ENCODE measurements at regions of chr10 and their contacts with region 1.

Region 1: GRCh38 chr10:93554760-93555432 is 11.6 kb upstream of the FFAR4 start:
- DNase-seq: peak; percentile 73
- ATAC-seq: peak; percentile 64
- H3K4me3 Mint-ChIP-seq: no peak overlapping the region
- H3K27ac Mint-ChIP-seq: no peak overlapping the region
- H3K4me1 Mint-ChIP-seq: no peaks in the 10 kb centered on the region
- H3K27me3 Mint-ChIP-seq: peaks cover 9% of the 10 kb centered on the region

Region 2: DNA sequence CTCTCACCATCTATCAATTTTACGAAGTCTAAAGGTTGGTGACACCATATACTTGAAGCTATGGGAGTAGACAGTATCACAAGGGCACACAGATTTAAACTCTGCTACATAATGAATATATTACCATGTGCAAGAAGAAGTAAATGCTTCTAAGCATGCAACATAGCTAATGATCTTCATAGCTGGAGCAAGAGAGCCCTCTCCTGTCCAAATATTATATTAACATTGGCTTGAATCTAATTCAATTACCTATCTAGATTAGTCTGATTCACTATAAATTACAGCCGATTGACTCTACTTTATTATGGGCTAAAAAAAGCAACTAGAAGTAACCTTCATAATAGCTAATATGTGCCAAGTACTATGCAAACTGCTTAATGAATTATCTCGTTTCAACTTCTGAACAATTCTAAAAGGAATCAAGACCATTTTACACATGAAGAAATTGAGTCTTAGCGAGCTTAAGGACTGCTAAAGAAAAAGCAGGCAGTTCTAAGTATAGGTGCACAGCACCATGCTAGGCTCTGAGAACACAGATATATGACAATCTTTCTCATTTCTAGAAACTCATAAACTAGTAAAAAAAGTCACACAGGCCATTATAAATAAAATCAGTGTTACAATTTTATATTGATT is 125.6 kb after region 1 on chr10:
- CTCF ChIA-PET with region 1: interaction called, 9 read pairs
- POLR2A ChIA-PET with region 1: no interaction called
- intact Hi-C with region 1: loop called in 1 of 2 experiments (anchors 2 kb)
- DNase-seq: no peak
- ATAC-seq: no peak
- H3K4me3 Mint-ChIP-seq: no peak overlapping the region
- H3K27ac Mint-ChIP-seq: no peak overlapping the region
- H3K4me1 Mint-ChIP-seq: no peaks in the 10 kb centered on the region
- H3K27me3 Mint-ChIP-seq: no peaks in the 10 kb centered on the region

Region 3: GRCh38 chr10:93766918-93767317 is 212.0 kb after region 1 on chr10:
- CTCF ChIA-PET with region 1: no interaction called
- POLR2A ChIA-PET with region 1: no interaction called
- intact Hi-C with region 1: no loop called
- DNase-seq: no peak
- ATAC-seq: no peak
- H3K4me3 Mint-ChIP-seq: no peak overlapping the region
- H3K27ac Mint-ChIP-seq: no peak overlapping the region
- H3K4me1 Mint-ChIP-seq: no peaks in the 10 kb centered on the region
- H3K27me3 Mint-ChIP-seq: peaks cover 18% of the 10 kb centered on the region

Region 4: DNA sequence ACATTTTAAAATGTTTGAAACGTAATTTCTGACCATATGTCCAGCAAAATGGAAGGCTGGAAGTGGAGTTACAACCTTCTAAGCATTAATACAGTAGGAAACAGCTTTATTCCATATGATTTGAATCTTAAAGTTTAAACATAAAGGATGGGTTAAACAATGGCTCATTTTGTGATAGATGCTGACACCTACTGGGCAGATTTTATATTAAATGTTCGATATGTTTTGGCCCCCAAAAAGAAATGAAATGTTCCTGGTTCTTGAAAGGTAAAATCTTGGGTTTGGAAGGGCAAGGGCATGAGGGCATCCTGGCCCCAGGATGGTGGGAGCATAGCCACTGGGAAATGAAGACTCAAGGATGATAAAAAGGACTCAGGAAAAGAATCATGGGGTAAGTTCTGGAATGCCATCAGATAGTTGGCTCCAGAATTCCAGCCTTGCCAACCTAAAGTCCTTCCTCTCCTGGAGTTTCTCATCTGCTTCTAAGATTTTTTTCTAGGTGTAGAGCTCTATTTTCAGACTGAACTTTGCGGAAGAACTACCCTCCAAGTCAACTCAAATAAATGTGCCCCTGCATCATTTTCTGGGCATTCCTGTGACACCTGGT is 304.3 kb after region 1 on chr10:
- CTCF ChIA-PET with region 1: interaction called, 5 read pairs
- POLR2A ChIA-PET with region 1: no interaction called
- intact Hi-C with region 1: loop called (anchors 1 to 2 kb)
- DNase-seq: no peak
- ATAC-seq: no peak
- H3K4me3 Mint-ChIP-seq: no peak overlapping the region
- H3K27ac Mint-ChIP-seq: no peak overlapping the region
- H3K4me1 Mint-ChIP-seq: no peaks in the 10 kb centered on the region
- H3K27me3 Mint-ChIP-seq: peaks cover 6% of the 10 kb centered on the region